Common myeloid progenitor, CD34-positive (primary cell): ENCODE measurements at regions of chr3 and their contacts with region 1.

Region 1: DNA sequence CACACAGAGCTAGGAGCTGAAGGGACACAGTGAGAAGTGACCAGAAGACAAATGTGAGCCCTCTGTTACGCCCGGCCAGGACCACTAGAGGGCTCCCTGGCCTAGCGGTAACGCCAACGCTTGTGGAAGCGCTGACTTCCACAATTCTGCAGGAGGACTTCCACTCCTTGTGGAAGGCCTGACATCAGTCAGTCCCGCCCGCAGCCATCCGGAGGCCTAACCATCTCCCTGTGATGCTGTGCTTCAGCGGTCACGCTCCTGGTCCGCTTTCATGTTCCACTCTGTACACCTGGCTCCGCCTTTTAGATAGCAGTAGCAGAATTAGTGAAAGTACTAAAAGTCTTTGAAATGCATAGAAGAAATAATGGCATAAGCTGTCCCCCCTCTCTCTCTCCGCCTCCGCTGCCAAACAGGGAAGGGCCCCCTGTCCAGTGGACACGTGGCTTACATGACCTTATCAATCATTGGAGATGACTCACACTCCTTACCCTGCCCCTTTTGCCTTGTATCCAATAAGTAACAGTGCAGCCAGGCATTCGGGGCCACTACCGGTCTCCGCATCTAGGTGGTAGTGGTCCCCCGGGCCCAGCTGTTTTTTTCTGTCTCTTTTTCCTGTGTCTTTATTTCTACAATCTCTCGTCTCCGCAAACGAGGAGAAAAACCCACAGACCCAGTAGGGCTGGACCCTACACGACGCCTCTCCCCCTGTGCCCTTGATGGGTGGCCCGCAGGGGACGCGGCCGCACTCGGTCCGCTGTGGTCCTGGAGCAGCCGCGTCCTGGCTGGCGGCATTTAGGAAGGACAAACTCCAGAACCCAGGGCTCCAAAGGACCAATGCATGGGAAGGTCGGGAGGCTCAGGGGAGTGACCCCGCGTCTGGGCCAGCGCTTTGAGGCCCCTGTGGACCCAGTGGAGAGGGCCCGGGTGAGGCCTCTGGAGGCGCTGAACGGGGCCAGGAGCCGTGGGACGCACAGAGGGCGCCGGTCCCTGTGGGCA is 27.0 kb upstream of the RPL32 start:
- DNase-seq: peak; percentile 58 to 83 (median 73)
- H3K4me3 ChIP-seq: peak overlapping the region; percentile 35 to 81 (median 55)
- H3K27ac ChIP-seq: no peak overlapping the region
- H3K4me1 ChIP-seq: peaks cover 0 to 19% (median 11%) of the 10 kb centered on the region in 4 experiments
- H3K27me3 ChIP-seq: peaks cover 0 to 5% (median 3%) of the 10 kb centered on the region in 5 experiments

Region 2: GRCh38 chr3:12884186-12884680 is 15.9 kb after region 1 on chr3:
- CTCF ChIA-PET with region 1: interaction called, 16 read pairs
- POLR2A ChIA-PET with region 1: no interaction called
- DNase-seq: no peak
- H3K4me3 ChIP-seq: no peak overlapping the region
- H3K27ac ChIP-seq: no peak overlapping the region
- H3K4me1 ChIP-seq: peaks cover 3 to 8% (median 8%) of the 10 kb centered on the region in 4 experiments
- H3K27me3 ChIP-seq: no peaks in the 10 kb centered on the region

Region 3: GRCh38 chr3:12891985-12892839 is 23.9 kb after region 1 on chr3:
- CTCF ChIA-PET with region 1: interaction called, 25 read pairs
- POLR2A ChIA-PET with region 1: no interaction called
- DNase-seq: peak; percentile 61 to 79 (median 72)
- H3K4me3 ChIP-seq: peak overlapping the region in 2 of 7 experiments; percentile 13 to 51
- H3K27ac ChIP-seq: no peak overlapping the region
- H3K4me1 ChIP-seq: peaks cover 0 to 3% (median 1%) of the 10 kb centered on the region in 4 experiments
- H3K27me3 ChIP-seq: peaks cover 0 to 2% (median 0%) of the 10 kb centered on the region in 5 experiments